Transverse colon (tissue), 4 donors: ENCODE measurements at regions of chr2 and their contacts with region 1.

Region 1: DNA sequence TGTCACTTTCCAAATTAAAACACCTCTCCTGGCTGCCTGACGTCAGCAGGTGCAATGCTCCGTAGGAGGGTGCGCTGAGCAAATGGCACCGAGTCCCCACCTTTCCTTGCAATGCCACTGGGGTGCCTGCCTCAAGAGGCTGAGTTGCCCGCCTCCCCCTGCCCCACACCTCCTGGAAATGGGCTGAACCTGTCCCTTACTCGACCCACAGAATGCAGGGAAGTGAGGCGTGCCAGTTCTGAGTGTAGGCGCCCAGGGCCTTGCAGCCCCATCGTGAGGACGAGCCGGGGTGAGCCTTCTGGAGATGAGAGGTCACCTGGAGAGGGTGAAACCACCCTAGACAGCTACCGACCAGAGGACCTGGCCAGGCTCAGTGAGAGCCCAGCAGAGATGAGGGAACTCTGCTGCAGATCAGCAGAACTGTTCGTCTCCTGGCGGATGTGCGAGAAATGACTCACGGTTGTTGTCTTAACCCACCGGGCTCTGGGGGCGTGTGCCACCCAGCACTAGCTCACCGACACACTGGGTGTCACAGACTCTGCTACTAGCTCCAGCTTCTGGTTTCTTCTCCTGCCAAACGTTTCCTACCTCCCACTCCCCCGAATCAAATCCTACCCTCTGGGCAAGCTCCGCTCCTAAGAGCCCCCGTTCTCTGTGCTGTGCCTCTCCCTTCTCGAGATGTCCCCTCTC is 168.7 kb upstream of the HDAC4 start:
- DNase-seq: no peak
- H3K4me3 ChIP-seq: no peak overlapping the region
- H3K27ac ChIP-seq: no peak overlapping the region
- H3K4me1 ChIP-seq: peaks cover 0 to 3% (median 0%) of the 10 kb centered on the region in 4 donors
- H3K27me3 ChIP-seq: peaks cover 13% of the 10 kb centered on the region
- CTCF ChIP-seq: no peak
- EP300 ChIP-seq: no peak
- POLR2A ChIP-seq: no peak

Region 2: DNA sequence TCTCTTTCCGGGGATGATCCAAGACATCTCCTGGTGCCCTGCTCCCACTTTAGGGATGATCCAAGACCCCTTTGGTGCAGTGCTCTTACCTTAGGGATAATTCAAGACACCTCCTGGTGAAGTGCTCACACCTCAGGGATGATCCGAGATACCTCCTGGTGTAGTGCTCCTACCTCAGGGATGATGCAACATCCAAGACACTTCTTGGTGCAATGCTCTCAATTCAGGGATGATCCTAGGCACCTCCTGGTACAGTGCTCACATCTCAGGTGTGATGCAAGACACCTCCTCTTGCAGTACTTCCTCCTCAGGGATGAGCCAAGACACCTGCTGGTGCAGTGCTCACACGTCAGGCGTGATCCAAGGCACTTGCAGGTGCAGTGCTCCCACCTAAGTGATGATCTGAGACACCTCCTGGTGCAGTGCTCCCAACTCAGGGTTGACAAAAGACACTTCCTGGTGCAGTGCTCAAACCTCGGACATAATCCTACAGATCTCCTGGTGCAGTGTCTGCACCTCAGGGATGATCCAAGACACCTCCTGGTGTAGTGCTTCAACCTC is 1020.6 kb before region 1 on chr2:
- in situ Hi-C with region 1: no loop called
- intact Hi-C with region 1: loop called (anchors 5 kb)
- DNase-seq: no peak
- H3K4me3 ChIP-seq: no peak overlapping the region
- H3K27ac ChIP-seq: no peak overlapping the region
- H3K4me1 ChIP-seq: no peaks in the 10 kb centered on the region
- H3K27me3 ChIP-seq: no peaks in the 10 kb centered on the region
- CTCF ChIP-seq: no peak
- EP300 ChIP-seq: no peak
- POLR2A ChIP-seq: no peak

Region 3: DNA sequence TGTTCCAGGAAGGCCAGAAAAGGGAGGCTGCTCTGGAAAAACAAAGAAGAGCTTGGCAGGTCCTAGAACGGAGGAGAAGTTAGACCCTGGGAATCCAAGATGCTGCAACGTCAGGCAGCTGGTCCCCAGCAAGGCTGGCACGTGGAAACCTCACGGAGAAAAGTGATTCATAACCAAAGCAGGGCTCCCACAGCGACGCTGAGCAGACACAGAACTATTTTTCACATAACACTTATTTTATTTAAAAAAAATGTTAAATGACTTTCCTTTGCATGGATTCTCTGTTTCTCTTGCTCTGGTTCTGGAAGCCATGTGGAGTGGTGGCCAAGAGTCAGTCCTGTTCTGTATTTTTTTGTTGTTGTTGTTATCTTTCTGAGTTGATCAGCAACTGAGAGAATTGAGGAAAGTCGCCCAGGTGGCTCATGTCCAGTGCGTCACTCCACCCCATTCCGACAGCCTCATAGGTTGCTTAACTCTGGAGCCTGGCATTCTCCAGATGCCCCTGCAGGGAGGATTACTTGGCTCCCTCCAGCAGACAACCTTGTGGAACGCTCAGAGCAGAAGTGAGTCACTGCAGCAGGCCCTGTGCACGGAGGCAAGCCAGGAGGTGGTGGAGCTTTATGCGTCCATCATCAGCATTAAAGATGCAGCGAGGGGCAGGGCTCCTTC is 61.2 kb after region 1 on chr2:
- in situ Hi-C with region 1: no loop called
- intact Hi-C with region 1: no loop called
- DNase-seq: no peak
- H3K4me3 ChIP-seq: no peak overlapping the region
- H3K27ac ChIP-seq: no peak overlapping the region
- H3K4me1 ChIP-seq: no peaks in the 10 kb centered on the region
- H3K27me3 ChIP-seq: no peaks in the 10 kb centered on the region
- CTCF ChIP-seq: no peak
- EP300 ChIP-seq: no peak
- POLR2A ChIP-seq: no peak